Endothelial cell of umbilical vein (primary cell): ENCODE measurements at regions of chr19 and their contacts with region 1.

Region 1: GRCh38 chr19:55503502-55504251 is 15.4 kb downstream of the SSC5D start:
- DNase-seq: peak; percentile 95
- H3K4me3 ChIP-seq: peak overlapping the region in 1 of 3 experiments; percentile 26
- H3K27ac ChIP-seq: no peak overlapping the region
- H3K4me1 ChIP-seq: no peaks in the 10 kb centered on the region
- H3K27me3 ChIP-seq: no peaks in the 10 kb centered on the region
- CTCF ChIP-seq: peak; percentile 96 to 98
- POLR2A ChIP-seq: no peak

Region 2: DNA sequence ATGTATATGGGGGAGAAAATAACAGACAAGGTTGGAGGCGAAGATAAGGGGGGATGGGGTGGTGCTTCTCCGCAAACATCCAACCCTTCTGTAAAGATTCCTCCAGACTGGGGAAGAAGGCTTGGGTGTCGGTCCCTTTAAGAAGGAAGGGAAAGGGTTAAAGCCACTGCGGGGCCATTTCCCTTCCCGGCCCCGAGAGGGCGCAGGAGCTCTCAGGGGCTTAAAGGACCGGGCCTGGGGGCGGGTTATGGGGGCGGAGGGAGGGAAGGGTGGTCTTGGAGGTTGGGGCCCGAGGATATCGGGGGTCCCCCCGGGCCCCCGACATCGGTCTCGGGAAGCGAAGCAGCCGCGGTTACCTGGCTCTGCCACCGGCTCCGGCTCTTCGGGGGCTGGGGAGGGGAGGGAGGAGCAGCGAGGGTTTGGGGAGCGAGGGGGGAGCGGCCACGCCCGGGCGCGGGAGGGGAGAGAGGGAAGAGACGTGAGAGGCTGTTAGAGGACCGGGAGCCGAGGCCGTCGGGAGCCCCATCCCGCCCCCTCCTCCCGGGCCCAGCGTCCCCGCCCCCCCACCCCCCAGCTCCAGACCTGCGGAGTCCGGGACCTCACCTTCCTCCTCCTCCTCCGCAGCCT is 357.5 kb before region 1 on chr19:
- CTCF ChIA-PET with region 1: interaction called, 90 read pairs
- POLR2A ChIA-PET with region 1: no interaction called
- dilution Hi-C with region 1: no loop called
- intact Hi-C with region 1: loop called (anchors 1 kb)
- DNase-seq: no peak
- H3K4me3 ChIP-seq: no peak overlapping the region
- H3K27ac ChIP-seq: no peak overlapping the region
- H3K4me1 ChIP-seq: no peaks in the 10 kb centered on the region
- H3K27me3 ChIP-seq: peaks cover 7 to 15% of the 10 kb centered on the region in 2 experiments
- CTCF ChIP-seq: peak; percentile 34 to 55
- POLR2A ChIP-seq: no peak

Region 3: DNA sequence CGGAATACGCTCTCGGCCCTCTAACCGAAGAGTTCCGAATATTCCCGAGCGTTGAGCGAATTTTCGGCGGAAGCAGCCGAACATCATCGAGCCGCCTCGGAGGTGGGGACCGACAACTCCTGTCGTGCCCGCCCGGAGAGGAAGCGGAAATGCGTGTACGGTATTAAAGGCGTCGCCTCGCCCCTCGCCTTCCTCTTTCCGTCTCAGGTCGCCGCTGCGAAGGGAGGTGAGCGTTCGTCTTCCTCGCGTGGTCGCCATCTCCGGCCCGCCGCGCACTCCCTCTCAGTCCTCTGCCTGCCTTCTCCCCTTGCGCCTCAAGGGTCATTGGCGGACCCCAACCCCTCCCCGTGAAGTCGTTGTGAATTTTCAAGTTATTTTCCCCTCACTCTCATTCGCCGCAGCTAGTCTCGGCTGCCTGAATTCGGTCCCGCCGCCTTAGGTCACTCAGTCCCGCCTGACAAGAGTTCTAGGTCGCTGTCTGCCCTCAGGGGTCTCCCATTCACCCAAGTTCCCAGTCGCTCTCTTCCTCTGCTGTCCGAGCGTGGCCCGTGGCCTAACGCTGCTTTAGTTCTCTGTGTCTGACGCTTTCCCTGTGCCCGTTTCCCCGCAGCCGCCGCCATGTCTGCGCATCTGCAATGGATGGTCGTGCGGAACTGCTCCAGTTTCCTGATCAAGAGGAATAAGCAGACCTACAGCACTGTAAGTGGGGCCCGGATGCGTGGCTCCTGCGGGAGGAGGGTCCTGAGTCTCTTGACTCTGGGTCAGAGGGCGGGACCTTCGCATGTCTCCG is 117.7 kb before region 1 on chr19 and contains the start of gene RPL28:
- CTCF ChIA-PET with region 1: interaction called, 10 read pairs
- POLR2A ChIA-PET with region 1: no interaction called
- dilution Hi-C with region 1: no loop called
- intact Hi-C with region 1: no loop called
- DNase-seq: peak; percentile 99
- H3K4me3 ChIP-seq: peak within 1 kb of the TSS; percentile 33 to 69 (median 67)
- H3K27ac ChIP-seq: peak within 1 kb of the TSS; percentile 75
- H3K4me1 ChIP-seq: peaks cover 31% of the 10 kb centered on the region
- H3K27me3 ChIP-seq: no peaks in the 10 kb centered on the region
- CTCF ChIP-seq: no peak
- POLR2A ChIP-seq: peak; percentile 100
- total RNA-seq, gene RPL28: 1,738 and 1,872 TPM in 2 replicates

Region 4: GRCh38 chr19:55461259-55461973 is 42.3 kb before region 1 on chr19 and contains the start of gene ISOC2:
- CTCF ChIA-PET with region 1: interaction called, 298 read pairs
- POLR2A ChIA-PET with region 1: no interaction called
- dilution Hi-C with region 1: no loop called
- intact Hi-C with region 1: no loop called
- DNase-seq: peak; percentile 100
- H3K4me3 ChIP-seq: peak within 1 kb of the TSS; percentile 39 to 95 (median 70)
- H3K27ac ChIP-seq: peak within 1 kb of the TSS; percentile 63
- H3K4me1 ChIP-seq: peaks cover 13% of the 10 kb centered on the region
- H3K27me3 ChIP-seq: no peaks in the 10 kb centered on the region
- CTCF ChIP-seq: no peak
- POLR2A ChIP-seq: no peak
- total RNA-seq, gene ISOC2: 43.6 and 49.3 TPM in 2 replicates

Region 5: GRCh38 chr19:55484593-55485438 is 18.9 kb before region 1 on chr19 and contains the start of gene NAT14:
- CTCF ChIA-PET with region 1: interaction called, 91 read pairs
- POLR2A ChIA-PET with region 1: interaction called, 3 read pairs
- dilution Hi-C with region 1: no loop called
- intact Hi-C with region 1: loop called (anchors 1 kb)
- DNase-seq: peak; percentile 61
- H3K4me3 ChIP-seq: peak within 1 kb of the TSS; percentile 32 to 63 (median 63)
- H3K27ac ChIP-seq: peak within 1 kb of the TSS; percentile 92
- H3K4me1 ChIP-seq: peaks cover 34% of the 10 kb centered on the region
- H3K27me3 ChIP-seq: no peaks in the 10 kb centered on the region
- CTCF ChIP-seq: no peak
- POLR2A ChIP-seq: no peak
- total RNA-seq, gene NAT14: 34.4 and 44.7 TPM in 2 replicates

Region 6: GRCh38 chr19:55632463-55632834 is 128.8 kb after region 1 on chr19:
- CTCF ChIA-PET with region 1: interaction called, 14 read pairs
- POLR2A ChIA-PET with region 1: no interaction called
- dilution Hi-C with region 1: no loop called
- intact Hi-C with region 1: no loop called
- DNase-seq: peak; percentile 91
- H3K4me3 ChIP-seq: no peak overlapping the region
- H3K27ac ChIP-seq: no peak overlapping the region
- H3K4me1 ChIP-seq: peaks cover 12% of the 10 kb centered on the region
- H3K27me3 ChIP-seq: no peaks in the 10 kb centered on the region
- CTCF ChIP-seq: peak; percentile 67 to 75
- POLR2A ChIP-seq: no peak